GM23248 (cell line): ENCODE measurements at regions of chr3 and their contacts with region 1.

Region 1: GRCh38 chr3:156519758-156520162 is 35.2 kb downstream of the SSR3 start:
- DNase-seq: no peak
- H3K4me3 ChIP-seq: no peak overlapping the region
- H3K27ac ChIP-seq: no peak overlapping the region
- H3K4me1 ChIP-seq: peaks cover 28% of the 10 kb centered on the region
- H3K27me3 ChIP-seq: no peaks in the 10 kb centered on the region

Region 2: GRCh38 chr3:156160647-156161046 is 359.1 kb before region 1 on chr3:
- in situ Hi-C with region 1: loop called (anchors 5 kb)
- DNase-seq: no peak
- H3K4me3 ChIP-seq: no peak overlapping the region
- H3K27ac ChIP-seq: no peak overlapping the region
- H3K4me1 ChIP-seq: no peaks in the 10 kb centered on the region
- H3K27me3 ChIP-seq: no peaks in the 10 kb centered on the region